Mammary epithelial cell (primary cell): ENCODE measurements at regions of chr6 and their contacts with region 1.

Region 1: DNA sequence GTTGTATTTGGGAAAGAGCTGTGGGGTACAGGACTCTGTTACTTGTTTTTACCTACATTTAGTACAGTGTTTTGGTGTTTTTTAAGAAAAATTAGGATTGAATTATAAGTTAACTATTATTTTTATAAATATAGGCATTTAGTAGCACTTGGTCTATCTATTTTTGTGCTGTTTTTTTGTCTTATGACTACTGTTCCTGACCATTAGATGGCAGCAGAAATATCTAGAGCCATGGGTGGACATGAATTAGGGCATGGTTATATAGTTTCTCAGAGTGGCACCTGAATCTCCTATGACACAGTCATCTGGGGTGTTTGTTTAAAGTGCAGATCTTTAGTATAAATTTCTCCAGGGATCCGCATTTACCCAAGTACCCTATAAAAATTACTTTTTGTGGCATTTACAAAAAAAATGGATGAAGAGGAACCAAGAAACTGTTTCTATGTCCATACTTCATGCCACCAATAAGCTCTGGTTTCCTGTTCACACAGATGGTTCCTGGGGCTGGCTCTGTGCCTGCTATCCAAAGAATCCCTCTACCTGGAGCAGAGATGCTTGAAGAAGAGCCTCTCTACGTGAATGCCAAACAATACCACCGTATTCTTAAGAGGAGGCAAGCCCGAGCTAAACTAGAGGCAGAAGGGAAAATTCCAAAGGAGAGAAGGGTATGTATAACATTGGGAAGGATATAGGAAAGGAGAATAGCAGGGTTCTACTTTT is 19.8 kb downstream of the NFYA start:
- DNase-seq: peak; percentile 31
- H3K4me3 ChIP-seq: no peak overlapping the region
- H3K27ac ChIP-seq: peak overlapping the region; percentile 1
- H3K4me1 ChIP-seq: peaks cover 17% of the 10 kb centered on the region
- H3K27me3 ChIP-seq: no peaks in the 10 kb centered on the region
- CTCF ChIP-seq: peak; percentile 40 to 63

Region 2: DNA sequence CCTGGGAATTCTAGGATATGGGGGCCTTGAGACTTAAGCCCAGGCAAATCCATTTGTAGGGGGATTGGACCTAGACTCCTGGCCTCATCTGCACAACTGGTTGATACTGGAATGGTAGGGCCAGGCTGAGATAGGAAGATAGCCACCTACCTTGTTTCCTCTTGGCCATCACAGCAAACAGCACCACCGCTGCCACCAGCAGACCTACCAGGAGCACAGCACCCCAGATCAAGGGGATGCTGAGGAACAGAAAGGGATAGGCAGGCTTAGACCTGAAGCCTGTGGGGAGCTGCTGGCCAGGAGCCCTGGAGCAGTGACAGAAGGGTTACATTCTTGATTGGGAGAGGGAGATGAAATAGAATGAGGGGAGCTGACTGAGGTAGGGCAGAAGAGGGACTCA is 58.1 kb after region 1 on chr6:
- CTCF ChIA-PET with region 1: no interaction called
- dilution Hi-C with region 1: no loop called
- in situ Hi-C with region 1: no loop called
- intact Hi-C with region 1: loop called (anchors 1 kb)
- DNase-seq: peak; percentile 21
- H3K4me3 ChIP-seq: no peak overlapping the region
- H3K27ac ChIP-seq: no peak overlapping the region
- H3K4me1 ChIP-seq: peaks cover 20% of the 10 kb centered on the region
- H3K27me3 ChIP-seq: no peaks in the 10 kb centered on the region
- CTCF ChIP-seq: peak in 1 of 2 donors; percentile 43

Region 3: GRCh38 chr6:41170547-41171160 is 78.1 kb after region 1 on chr6:
- CTCF ChIA-PET with region 1: no interaction called
- dilution Hi-C with region 1: no loop called
- in situ Hi-C with region 1: loop called in 1 of 2 experiments (anchors 5 kb)
- intact Hi-C with region 1: no loop called
- DNase-seq: no peak
- H3K4me3 ChIP-seq: no peak overlapping the region
- H3K27ac ChIP-seq: no peak overlapping the region
- H3K4me1 ChIP-seq: no peaks in the 10 kb centered on the region
- H3K27me3 ChIP-seq: no peaks in the 10 kb centered on the region
- CTCF ChIP-seq: no peak

Region 4: DNA sequence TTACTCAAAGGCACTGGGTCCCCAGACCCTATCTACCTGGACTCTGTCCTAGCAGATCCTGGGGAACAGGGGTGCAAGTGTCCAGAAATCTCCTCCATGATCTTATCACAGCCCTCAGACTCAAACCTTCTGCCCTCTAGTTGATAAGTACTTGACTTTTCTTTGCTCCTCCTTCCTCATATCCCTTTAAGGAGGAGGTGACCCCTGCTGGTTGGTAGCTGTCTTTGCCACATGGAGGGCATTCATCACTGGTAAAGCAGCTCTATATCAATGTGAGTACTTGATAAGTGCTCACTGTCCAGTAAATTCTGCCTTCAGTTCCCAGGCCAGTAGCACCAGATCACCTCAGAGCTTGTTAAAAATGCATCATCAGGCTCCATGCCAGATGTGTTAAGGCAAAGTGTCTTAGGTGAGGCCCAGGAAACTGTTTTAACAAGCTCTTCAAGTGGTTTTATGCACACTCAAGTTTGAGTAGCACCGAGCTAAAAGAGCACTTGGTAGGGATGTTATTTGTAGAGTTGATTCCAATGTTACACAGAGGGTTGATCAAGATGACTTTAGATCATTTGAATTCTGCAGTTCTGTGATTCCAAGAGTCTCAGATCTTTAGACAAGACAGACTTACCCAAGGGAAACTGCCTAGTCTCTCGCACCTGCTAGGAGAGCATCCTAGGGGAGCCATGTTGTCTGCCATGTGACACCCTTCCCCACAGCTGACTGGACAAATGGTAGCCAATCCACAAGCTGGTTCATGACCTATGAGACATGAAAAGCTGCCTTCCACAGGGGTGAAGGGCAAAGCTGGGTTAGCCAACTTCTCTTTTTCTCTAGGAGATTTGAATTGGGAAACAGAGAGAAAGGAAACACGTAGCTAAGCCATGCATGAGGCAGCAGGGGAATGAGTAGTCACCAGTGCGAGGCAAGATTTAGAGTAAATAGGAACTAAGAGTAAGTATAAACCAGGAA is 89.8 kb after region 1 on chr6:
- CTCF ChIA-PET with region 1: interaction called, 8 read pairs
- dilution Hi-C with region 1: loop called (anchors 5 kb)
- in situ Hi-C with region 1: loop called (anchors 5 kb)
- intact Hi-C with region 1: loop called (anchors 1 kb)
- DNase-seq: peak; percentile 70
- H3K4me3 ChIP-seq: no peak overlapping the region
- H3K27ac ChIP-seq: no peak overlapping the region
- H3K4me1 ChIP-seq: peaks cover 12% of the 10 kb centered on the region
- H3K27me3 ChIP-seq: no peaks in the 10 kb centered on the region
- CTCF ChIP-seq: peak; percentile 90 to 97

Region 5: DNA sequence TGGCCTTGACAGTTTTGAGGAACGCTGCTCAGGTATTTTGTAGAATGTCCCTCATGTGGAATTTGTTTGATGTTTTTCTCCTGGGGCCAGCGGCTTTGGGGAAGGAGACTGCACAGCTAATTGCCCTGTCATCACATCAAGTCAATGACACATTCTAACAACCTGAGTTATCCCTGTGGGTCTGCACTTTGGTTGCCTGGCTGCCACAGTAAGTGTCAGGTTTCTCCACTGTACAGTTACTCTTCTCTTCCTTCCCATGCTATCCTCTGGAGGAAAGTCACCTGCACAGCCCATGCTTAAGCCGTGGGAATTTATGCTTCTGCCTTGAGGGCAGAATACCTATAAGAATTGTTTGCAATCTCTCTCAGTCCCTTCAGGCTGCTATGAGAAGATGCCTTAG is 134.2 kb after region 1 on chr6:
- CTCF ChIA-PET with region 1: no interaction called
- dilution Hi-C with region 1: no loop called
- in situ Hi-C with region 1: no loop called
- intact Hi-C with region 1: no loop called
- DNase-seq: no peak
- H3K4me3 ChIP-seq: no peak overlapping the region
- H3K27ac ChIP-seq: no peak overlapping the region
- H3K4me1 ChIP-seq: no peaks in the 10 kb centered on the region
- H3K27me3 ChIP-seq: no peaks in the 10 kb centered on the region
- CTCF ChIP-seq: no peak

Region 6: DNA sequence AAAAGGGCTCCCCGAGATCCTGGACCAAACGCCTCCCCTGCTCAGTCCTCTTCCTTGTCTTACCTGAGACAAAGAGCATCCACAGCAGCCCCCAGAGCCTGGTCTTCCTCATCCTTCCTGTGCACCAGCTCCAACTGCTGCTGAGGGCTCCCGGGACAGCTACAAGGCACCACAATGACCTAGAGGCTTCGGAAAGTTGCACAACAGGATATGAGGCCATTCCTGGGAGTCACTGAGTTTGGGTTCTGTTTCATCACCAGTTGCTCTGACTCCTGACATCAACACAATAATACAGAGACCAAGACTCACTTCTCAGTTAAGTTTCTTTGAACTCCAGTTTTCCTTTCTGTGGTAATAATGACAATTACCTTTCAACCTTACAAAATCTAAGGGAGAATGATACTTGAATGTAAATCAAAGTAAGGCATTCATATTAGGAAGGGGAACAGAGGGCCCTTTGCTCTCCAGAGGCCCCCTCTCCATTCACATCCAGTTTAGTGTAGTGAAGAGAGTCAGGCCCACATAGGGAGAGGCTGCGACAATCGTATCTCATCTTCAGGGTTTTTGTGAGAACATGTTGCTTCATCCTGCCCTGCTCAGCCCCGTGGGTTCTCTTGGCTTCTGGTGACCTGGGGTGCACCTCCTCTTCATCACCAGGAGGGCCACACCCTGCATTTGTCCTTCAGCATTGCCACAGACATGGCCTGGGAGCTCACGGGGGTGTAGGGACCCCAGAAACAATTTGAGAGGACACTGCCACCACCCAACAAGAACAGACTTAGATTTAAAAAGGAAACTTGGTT is 194.2 kb after region 1 on chr6 and contains the start of gene TREM1:
- CTCF ChIA-PET with region 1: interaction called, 6 read pairs
- dilution Hi-C with region 1: no loop called
- in situ Hi-C with region 1: no loop called
- intact Hi-C with region 1: loop called (anchors 10 kb)
- DNase-seq: peak; percentile 95
- H3K4me3 ChIP-seq: no peak within 1 kb of the TSS
- H3K27ac ChIP-seq: peak within 1 kb of the TSS; percentile 74
- H3K4me1 ChIP-seq: peaks cover 11% of the 10 kb centered on the region
- H3K27me3 ChIP-seq: no peaks in the 10 kb centered on the region
- CTCF ChIP-seq: no peak
- total RNA-seq, gene TREM1: 0.50 to 1.2 TPM